ENCODE measurements at regions of chr18 and their contacts with region 1.

Region 1: DNA sequence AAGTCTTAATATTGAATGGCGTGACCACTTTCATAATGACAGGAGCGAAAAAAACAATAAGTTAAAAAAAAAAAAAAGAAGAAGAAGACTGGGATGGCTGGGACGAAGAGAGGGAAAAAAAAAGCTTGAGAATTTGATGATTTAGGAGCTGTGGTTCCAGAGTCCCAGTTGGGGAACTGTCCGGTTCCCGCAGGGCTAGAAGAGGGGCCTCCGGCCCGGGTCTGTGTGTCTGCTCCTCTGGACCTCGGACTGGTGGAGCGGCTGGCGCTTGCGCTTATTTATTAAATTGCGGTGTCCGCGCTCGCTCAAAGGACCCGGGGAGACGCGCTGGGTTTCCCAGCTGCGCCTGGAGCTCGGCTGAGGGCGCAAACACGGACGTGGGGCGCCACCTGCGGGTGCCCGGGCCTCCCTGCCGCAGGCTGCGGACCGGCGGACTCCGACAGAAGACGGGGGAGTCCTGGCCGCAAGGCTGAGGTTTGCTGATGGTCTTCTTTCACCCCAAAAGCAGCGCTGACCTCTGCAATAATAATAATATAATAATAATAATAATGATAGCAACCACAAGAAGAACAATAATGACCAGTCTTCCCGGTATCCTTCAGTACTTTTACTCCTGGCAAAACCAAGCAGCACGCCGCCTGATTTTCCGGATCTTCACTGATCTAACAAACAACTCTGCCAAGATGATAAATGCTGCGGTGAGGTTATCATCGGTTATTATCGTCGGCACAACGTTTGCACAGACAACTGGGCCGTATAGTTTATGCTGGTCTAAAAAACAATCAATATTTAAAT is at the start of gene CBLN2:
- DNase-seq: peak; percentile 79
- H3K4me3 ChIP-seq: peak within 1 kb of the TSS; percentile 55
- H3K27ac ChIP-seq: no peak within 1 kb of the TSS
- H3K4me1 ChIP-seq: no peaks in the 10 kb centered on the region
- H3K27me3 ChIP-seq: peaks cover 49% of the 10 kb centered on the region
- total RNA-seq, gene CBLN2: not detected in 2 replicates

Region 2: DNA sequence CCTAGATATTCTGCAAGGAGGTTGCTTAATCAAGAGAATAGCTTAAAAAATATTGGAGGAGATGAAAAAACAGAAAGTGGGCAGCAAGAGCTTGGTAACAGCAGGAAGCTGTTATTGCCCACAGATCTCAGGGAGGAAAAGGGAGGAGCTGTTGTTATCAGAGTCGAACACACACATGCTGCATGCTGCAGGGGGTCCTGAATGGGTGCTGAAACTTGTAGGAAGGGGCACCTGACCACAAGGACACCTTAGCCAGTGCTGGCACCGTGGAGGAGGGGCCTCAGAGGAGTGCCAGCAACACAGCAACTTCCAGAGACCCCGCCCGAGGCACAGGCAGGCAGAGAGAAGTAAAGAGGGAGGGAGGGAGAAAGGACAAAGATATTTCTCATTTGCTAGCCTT is 1922.6 kb before region 1 on chr18:
- in situ Hi-C with region 1: loop called (anchors 25 kb)
- DNase-seq: no peak
- H3K4me3 ChIP-seq: no peak overlapping the region
- H3K27ac ChIP-seq: no peak overlapping the region
- H3K4me1 ChIP-seq: no peaks in the 10 kb centered on the region
- H3K27me3 ChIP-seq: no peaks in the 10 kb centered on the region

Region 3: GRCh38 chr18:70931942-70932814 is 1612.1 kb before region 1 on chr18:
- in situ Hi-C with region 1: loop called (anchors 25 kb)
- DNase-seq: peak; percentile 55
- H3K4me3 ChIP-seq: no peak overlapping the region
- H3K27ac ChIP-seq: no peak overlapping the region
- H3K4me1 ChIP-seq: no peaks in the 10 kb centered on the region
- H3K27me3 ChIP-seq: no peaks in the 10 kb centered on the region

Region 4: DNA sequence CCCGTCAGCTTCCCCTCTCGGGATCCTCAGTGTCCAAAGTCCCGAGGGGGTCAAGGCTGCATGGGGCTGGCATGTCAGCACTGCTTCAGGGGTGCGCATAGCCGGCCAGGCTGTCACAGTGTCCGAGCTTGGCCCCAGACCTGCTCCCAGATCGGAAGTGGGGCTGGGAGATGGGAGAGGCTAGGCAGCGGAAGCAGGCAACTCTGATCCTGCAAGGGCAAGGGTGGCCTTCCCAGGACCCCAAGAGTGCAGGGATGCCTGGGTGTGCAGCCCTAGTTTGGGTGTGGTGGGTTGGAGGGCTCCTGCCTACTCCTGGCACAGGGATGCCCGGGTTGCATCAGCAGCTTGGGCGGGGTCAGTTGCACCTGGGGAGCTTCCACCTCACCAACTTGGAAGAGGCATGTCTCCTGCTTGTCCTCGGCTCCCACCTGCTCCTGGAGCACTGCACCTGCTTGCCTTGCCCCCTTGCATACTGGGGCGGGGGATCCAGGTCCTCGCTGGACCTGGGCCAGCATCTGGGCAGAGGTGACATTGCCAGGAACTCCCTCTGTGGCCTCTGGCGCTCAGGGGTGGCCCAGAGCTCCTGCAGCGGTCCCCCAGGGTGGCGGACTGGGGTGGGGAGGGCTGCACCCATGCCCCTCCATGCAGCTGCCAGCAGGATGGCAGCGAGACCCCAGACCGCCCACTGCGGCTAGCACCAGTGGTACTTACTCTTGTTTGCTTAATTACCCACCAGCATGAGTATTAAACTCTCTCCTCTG is 41.4 kb before region 1 on chr18:
- in situ Hi-C with region 1: no loop called
- DNase-seq: no peak
- H3K4me3 ChIP-seq: no peak overlapping the region
- H3K27ac ChIP-seq: no peak overlapping the region
- H3K4me1 ChIP-seq: no peaks in the 10 kb centered on the region
- H3K27me3 ChIP-seq: no peaks in the 10 kb centered on the region